Stomach (tissue), 19 donors: ENCODE measurements at regions of chr11 and their contacts with region 1.

Region 1: GRCh38 chr11:128884703-128885338 is 6.3 kb upstream of the KCNJ5 start:
- DNase-seq: peak; percentile 70 to 91
- H3K4me3 ChIP-seq: no peak overlapping the region
- H3K27ac ChIP-seq: no peak overlapping the region
- H3K4me1 ChIP-seq: peaks cover 0 to 8% (median under 1%) of the 10 kb centered on the region in 4 donors
- H3K27me3 ChIP-seq: peaks cover 0 to 30% (median 0%) of the 10 kb centered on the region in 3 donors
- CTCF ChIP-seq: peak in 5 of 7 experiments; percentile 61 to 91 (median 83)
- EP300 ChIP-seq: no peak
- POLR2A ChIP-seq: no peak

Region 2: GRCh38 chr11:128653801-128654231 is 231.0 kb before region 1 on chr11:
- intact Hi-C with region 1: no loop called
- DNase-seq: peak; percentile 44 to 68
- H3K4me3 ChIP-seq: no peak overlapping the region
- H3K27ac ChIP-seq: no peak overlapping the region
- H3K4me1 ChIP-seq: no peaks in the 10 kb centered on the region
- H3K27me3 ChIP-seq: no peaks in the 10 kb centered on the region
- CTCF ChIP-seq: no peak
- EP300 ChIP-seq: no peak
- POLR2A ChIP-seq: no peak

Region 3: GRCh38 chr11:128757235-128757711 is 127.5 kb before region 1 on chr11:
- intact Hi-C with region 1: no loop called
- DNase-seq: peak in 1 of 2 donors; percentile 57
- H3K4me3 ChIP-seq: no peak overlapping the region
- H3K27ac ChIP-seq: peak overlapping the region in 1 of 5 donors; percentile 10
- H3K4me1 ChIP-seq: peaks cover 0 to 20% (median 4%) of the 10 kb centered on the region in 4 donors
- H3K27me3 ChIP-seq: no peaks in the 10 kb centered on the region
- CTCF ChIP-seq: peak in 1 of 7 experiments; percentile 37
- EP300 ChIP-seq: no peak
- POLR2A ChIP-seq: no peak

Region 4: GRCh38 chr11:128956401-128957201 is 71.8 kb after region 1 on chr11:
- intact Hi-C with region 1: loop called (anchors 2 kb)
- DNase-seq: peak in 1 of 2 donors; percentile 87
- H3K4me3 ChIP-seq: no peak overlapping the region
- H3K27ac ChIP-seq: no peak overlapping the region
- H3K4me1 ChIP-seq: peaks cover 0 to 4% (median 0%) of the 10 kb centered on the region in 4 donors
- H3K27me3 ChIP-seq: peaks cover 0 to 15% (median 0%) of the 10 kb centered on the region in 3 donors
- CTCF ChIP-seq: peak in 5 of 7 experiments; percentile 26 to 87 (median 62)
- EP300 ChIP-seq: no peak
- POLR2A ChIP-seq: no peak